Activated naive CD4-positive, alpha-beta T cell treated with anti-CD3 and anti-CD28 coated beads for 36 hours (primary cell): ENCODE measurements at regions of chr18 and their contacts with region 1.

Region 1: GRCh38 chr18:21111341-21112139 is at the start of gene ROCK1:
- DNase-seq: peak; percentile 98
- H3K4me3 Mint-ChIP-seq: no peak within 1 kb of the TSS
- H3K27ac Mint-ChIP-seq: peak within 1 kb of the TSS; percentile 93
- H3K4me1 Mint-ChIP-seq: peaks cover 6% of the 10 kb centered on the region
- H3K27me3 Mint-ChIP-seq: no peaks in the 10 kb centered on the region
- total RNA-seq, gene ROCK1: 49.8 to 51.5 TPM

Region 2: GRCh38 chr18:21012308-21012707 is 99.2 kb before region 1 on chr18:
- CTCF ChIA-PET with region 1: no interaction called
- intact Hi-C with region 1: loop called (anchors 10 kb)
- DNase-seq: no peak
- H3K4me3 Mint-ChIP-seq: no peak overlapping the region
- H3K27ac Mint-ChIP-seq: no peak overlapping the region
- H3K4me1 Mint-ChIP-seq: no peaks in the 10 kb centered on the region
- H3K27me3 Mint-ChIP-seq: no peaks in the 10 kb centered on the region

Region 3: GRCh38 chr18:21085579-21086166 is 25.9 kb before region 1 on chr18:
- CTCF ChIA-PET with region 1: no interaction called
- intact Hi-C with region 1: loop called (anchors 2 kb)
- DNase-seq: no peak
- H3K4me3 Mint-ChIP-seq: no peak overlapping the region
- H3K27ac Mint-ChIP-seq: no peak overlapping the region
- H3K4me1 Mint-ChIP-seq: peaks cover 65% of the 10 kb centered on the region
- H3K27me3 Mint-ChIP-seq: no peaks in the 10 kb centered on the region

Region 4: GRCh38 chr18:21146016-21146415 is 34.5 kb after region 1 on chr18:
- CTCF ChIA-PET with region 1: no interaction called
- intact Hi-C with region 1: loop called (anchors 5 kb)
- DNase-seq: no peak
- H3K4me3 Mint-ChIP-seq: no peak overlapping the region
- H3K27ac Mint-ChIP-seq: no peak overlapping the region
- H3K4me1 Mint-ChIP-seq: no peaks in the 10 kb centered on the region
- H3K27me3 Mint-ChIP-seq: no peaks in the 10 kb centered on the region

Region 5: GRCh38 chr18:21600526-21601410 is 489.2 kb after region 1 on chr18 and contains the start of gene ESCO1:
- CTCF ChIA-PET with region 1: no interaction called
- intact Hi-C with region 1: loop called (anchors 2 kb)
- DNase-seq: peak; percentile 95
- H3K4me3 Mint-ChIP-seq: peak within 1 kb of the TSS; percentile 92
- H3K27ac Mint-ChIP-seq: peak within 1 kb of the TSS; percentile 96
- H3K4me1 Mint-ChIP-seq: peaks cover 26% of the 10 kb centered on the region
- H3K27me3 Mint-ChIP-seq: no peaks in the 10 kb centered on the region
- total RNA-seq, gene ESCO1: 14.3 to 16.7 TPM

Region 6: DNA sequence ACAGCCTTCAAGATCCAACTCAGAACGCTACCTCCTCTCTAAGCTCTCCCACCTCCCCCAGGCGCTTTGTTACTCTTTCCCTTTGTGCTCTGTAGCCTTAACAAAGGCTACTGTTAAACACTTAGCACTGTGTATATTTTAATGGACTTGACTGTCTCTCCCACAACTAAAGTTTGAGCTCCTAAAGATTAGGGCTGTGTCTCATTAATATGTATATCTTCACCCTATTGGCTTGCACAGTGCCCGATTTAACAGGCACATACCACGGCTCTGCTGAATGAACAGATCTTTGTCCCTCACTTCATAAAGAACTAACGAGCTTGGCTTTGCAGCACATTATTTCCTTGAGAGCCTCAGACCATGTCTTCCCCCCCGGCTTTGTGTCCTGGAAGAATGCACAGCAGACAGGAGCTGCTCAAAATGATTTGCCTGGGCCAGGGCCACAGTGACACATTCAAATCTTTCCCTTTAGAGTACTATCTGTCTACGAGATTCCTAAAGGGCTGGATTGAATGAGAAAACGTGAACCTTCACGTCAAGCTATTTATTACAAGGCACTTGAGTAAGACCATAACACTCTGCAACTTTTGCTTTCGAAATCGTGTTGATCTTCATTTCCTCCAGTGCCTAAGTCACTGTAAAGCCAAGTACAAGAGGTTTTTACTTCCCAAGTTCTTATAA is 571.0 kb after region 1 on chr18:
- CTCF ChIA-PET with region 1: no interaction called
- intact Hi-C with region 1: loop called (anchors 10 kb)
- DNase-seq: peak; percentile 34
- H3K4me3 Mint-ChIP-seq: no peak overlapping the region
- H3K27ac Mint-ChIP-seq: no peak overlapping the region
- H3K4me1 Mint-ChIP-seq: peaks cover 22% of the 10 kb centered on the region
- H3K27me3 Mint-ChIP-seq: no peaks in the 10 kb centered on the region

Region 7: GRCh38 chr18:21740724-21741510 is 629.4 kb after region 1 on chr18 and contains the start of gene MIB1:
- CTCF ChIA-PET with region 1: no interaction called
- intact Hi-C with region 1: loop called (anchors 1 kb)
- DNase-seq: no peak
- H3K4me3 Mint-ChIP-seq: peak within 1 kb of the TSS; percentile 86
- H3K27ac Mint-ChIP-seq: peak within 1 kb of the TSS; percentile 88
- H3K4me1 Mint-ChIP-seq: peaks cover 27% of the 10 kb centered on the region
- H3K27me3 Mint-ChIP-seq: peaks cover 2% of the 10 kb centered on the region
- total RNA-seq, gene MIB1: 22.8 to 26.2 TPM

Region 8: GRCh38 chr18:21851327-21851972 is 739.9 kb after region 1 on chr18:
- CTCF ChIA-PET with region 1: no interaction called
- intact Hi-C with region 1: no loop called
- DNase-seq: no peak
- H3K4me3 Mint-ChIP-seq: no peak overlapping the region
- H3K27ac Mint-ChIP-seq: no peak overlapping the region
- H3K4me1 Mint-ChIP-seq: peaks cover 6% of the 10 kb centered on the region
- H3K27me3 Mint-ChIP-seq: no peaks in the 10 kb centered on the region